Posterior vena cava (tissue), 2 donors: ENCODE measurements at regions of chr19 and their contacts with region 1.

Region 1: GRCh38 chr19:10717356-10718204 is at the start of gene DNM2:
- DNase-seq: peak; percentile 99
- total RNA-seq, gene DNM2: 94.9 to 107 TPM

Region 2: DNA sequence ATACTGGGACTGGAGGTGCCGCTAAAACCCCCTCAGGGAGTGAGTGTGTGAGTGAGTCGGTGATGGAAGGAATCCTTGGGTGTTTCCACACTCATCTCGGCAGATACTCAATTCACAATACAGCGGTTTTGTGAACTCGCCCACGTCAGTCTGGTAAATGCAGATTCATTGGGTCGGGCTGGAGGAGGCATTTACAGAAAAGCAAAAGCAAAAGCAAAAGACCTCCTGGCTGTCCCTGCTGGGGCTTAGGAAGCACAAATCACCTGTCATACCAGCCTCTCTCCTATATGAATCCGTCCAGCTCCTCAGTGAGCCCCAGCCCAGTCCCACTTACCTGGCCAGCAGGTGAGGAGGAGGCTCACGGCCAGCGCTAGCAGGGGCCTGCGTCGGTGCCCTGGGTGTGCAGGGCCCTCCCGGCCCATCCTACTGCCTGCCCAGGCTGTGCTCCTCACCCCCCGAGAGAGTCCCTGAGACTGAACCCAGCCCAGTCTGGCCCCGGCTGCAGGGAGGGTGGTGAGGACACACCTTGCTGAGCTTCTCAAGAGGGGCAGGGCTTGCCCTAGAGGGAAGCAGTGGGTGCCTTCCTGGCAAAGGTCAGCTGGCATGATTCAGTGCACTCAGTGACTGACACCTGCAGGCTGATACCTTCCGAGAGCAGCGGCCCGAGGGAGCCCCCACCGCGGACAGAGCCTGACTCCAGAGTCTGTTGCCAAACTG is 1707.5 kb before region 1 on chr19 and contains the start of gene MUC16:
- intact Hi-C with region 1: no loop called
- DNase-seq: no peak
- total RNA-seq, gene MUC16: under 0.01 to 0.10 TPM

Region 3: GRCh38 chr19:10682397-10683063 is 35.0 kb before region 1 on chr19:
- intact Hi-C with region 1: loop called in 1 of 2 experiments (anchors 1 kb)
- DNase-seq: no peak

Region 4: GRCh38 chr19:10769533-10770491 is 52.2 kb after region 1 on chr19:
- intact Hi-C with region 1: loop called (anchors 5 kb)
- DNase-seq: no peak

Region 5: GRCh38 chr19:10864538-10864899 is 146.9 kb after region 1 on chr19:
- intact Hi-C with region 1: loop called in 1 of 2 experiments (anchors 10 kb)
- DNase-seq: peak; percentile 94